Activated CD4-positive, alpha-beta T cell treated with anti-CD3 and anti-CD28 coated beads for 36 hours (primary cell): ENCODE measurements at regions of chr11 and their contacts with region 1.

Region 1: DNA sequence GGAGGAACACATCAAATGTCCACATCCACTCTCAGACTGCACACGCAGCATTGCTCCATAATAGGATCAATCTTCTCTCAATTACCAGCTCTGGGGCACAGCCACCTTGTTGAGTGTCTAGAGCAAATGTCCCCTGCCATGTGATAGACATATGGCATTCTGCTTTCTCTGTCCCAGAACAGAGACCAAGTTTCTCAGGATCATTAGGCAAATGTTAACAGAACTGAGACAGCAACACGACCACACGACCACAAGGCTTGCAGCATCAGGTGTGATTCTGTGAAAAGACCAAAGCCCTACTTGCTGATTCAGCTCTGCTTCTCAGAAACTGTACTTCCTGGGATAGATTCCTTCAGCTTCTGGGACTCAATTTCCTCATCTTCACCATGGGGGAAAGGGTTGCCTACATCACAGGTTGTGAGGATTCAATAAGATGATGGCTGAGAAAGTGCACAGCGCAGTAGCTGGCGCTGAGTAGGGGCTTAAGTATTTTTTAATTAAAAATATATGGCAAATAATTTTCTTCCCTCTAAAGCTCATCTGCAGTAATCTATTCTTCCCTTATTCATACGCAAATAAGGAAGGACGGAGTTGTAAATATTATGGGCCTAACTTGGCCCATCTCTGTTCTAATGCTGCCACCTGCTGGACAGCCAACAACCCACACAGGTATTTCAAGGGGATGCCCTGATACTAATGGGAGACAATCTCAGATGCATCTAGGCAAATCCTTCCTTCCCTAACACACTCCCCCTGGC is 54.3 kb upstream of the USP47 start:
- DNase-seq: peak; percentile 82
- ATAC-seq: peak; percentile 90
- H3K4me3 Mint-ChIP-seq: no peak overlapping the region
- H3K27ac Mint-ChIP-seq: no peak overlapping the region
- H3K4me1 Mint-ChIP-seq: no peaks in the 10 kb centered on the region
- H3K27me3 Mint-ChIP-seq: peaks cover 2% of the 10 kb centered on the region

Region 2: GRCh38 chr11:10770626-10771254 is 1016.7 kb before region 1 on chr11:
- CTCF ChIA-PET with region 1: interaction called, 3 read pairs
- POLR2A ChIA-PET with region 1: no interaction called
- intact Hi-C with region 1: loop called in 1 of 2 experiments (anchors 5 kb)
- DNase-seq: peak; percentile 55
- ATAC-seq: no peak
- H3K4me3 Mint-ChIP-seq: no peak overlapping the region
- H3K27ac Mint-ChIP-seq: no peak overlapping the region
- H3K4me1 Mint-ChIP-seq: no peaks in the 10 kb centered on the region
- H3K27me3 Mint-ChIP-seq: no peaks in the 10 kb centered on the region

Region 3: GRCh38 chr11:11028017-11028692 is 759.3 kb before region 1 on chr11:
- CTCF ChIA-PET with region 1: interaction called, 44 read pairs
- POLR2A ChIA-PET with region 1: no interaction called
- intact Hi-C with region 1: loop called (anchors 1 kb)
- DNase-seq: peak; percentile 88
- ATAC-seq: peak; percentile 91
- H3K4me3 Mint-ChIP-seq: no peak overlapping the region
- H3K27ac Mint-ChIP-seq: no peak overlapping the region
- H3K4me1 Mint-ChIP-seq: no peaks in the 10 kb centered on the region
- H3K27me3 Mint-ChIP-seq: no peaks in the 10 kb centered on the region

Region 4: GRCh38 chr11:11125618-11126017 is 661.9 kb before region 1 on chr11:
- CTCF ChIA-PET with region 1: no interaction called
- POLR2A ChIA-PET with region 1: no interaction called
- intact Hi-C with region 1: no loop called
- DNase-seq: no peak
- ATAC-seq: no peak
- H3K4me3 Mint-ChIP-seq: no peak overlapping the region
- H3K27ac Mint-ChIP-seq: no peak overlapping the region
- H3K4me1 Mint-ChIP-seq: no peaks in the 10 kb centered on the region
- H3K27me3 Mint-ChIP-seq: peaks cover 3% of the 10 kb centered on the region

Region 5: GRCh38 chr11:11265994-11266606 is 521.4 kb before region 1 on chr11:
- CTCF ChIA-PET with region 1: no interaction called
- POLR2A ChIA-PET with region 1: no interaction called
- intact Hi-C with region 1: loop called in 1 of 2 experiments (anchors 5 kb)
- DNase-seq: peak; percentile 83
- ATAC-seq: peak; percentile 68
- H3K4me3 Mint-ChIP-seq: no peak overlapping the region
- H3K27ac Mint-ChIP-seq: no peak overlapping the region
- H3K4me1 Mint-ChIP-seq: no peaks in the 10 kb centered on the region
- H3K27me3 Mint-ChIP-seq: peaks cover 2% of the 10 kb centered on the region

Region 6: DNA sequence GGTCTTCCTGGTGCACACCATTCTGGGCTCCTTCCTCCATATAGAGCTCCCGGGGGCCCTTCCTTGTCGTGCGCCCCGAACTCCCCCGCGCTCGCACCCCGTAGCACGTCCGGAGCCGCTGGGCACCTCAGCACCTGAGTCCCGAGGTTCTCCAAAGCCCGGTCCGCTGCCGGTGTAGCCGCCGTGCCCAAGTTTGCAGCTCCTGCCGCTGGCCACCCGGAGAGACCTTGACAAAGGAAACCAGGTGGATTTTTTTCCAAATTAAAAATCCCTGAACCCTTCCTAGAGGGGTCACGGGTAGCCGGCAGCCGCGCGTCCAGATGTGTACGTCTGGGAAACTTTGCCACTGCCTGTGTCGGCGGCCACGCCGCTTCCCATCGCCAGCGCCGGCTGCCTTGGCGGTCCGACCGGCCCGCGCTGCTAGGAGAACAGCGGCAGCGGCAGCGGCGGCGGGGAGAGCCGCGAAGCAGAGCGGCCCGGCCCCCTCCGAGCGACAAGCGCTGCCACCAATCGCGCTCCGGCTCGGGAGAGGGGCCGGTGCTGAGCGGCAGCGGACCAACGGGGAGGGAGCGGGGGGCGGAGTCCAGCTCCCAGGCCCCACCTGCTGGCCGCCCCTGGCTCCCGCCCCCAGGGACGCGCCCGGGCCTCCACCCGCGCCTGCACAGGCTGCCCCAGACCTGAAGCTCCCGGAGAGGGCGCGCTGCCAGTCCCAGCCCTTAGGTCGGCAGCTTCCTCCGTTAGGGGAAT is 165.7 kb before region 1 on chr11 and contains the start of gene GALNT18:
- CTCF ChIA-PET with region 1: interaction called, 3 read pairs
- POLR2A ChIA-PET with region 1: no interaction called
- intact Hi-C with region 1: loop called (anchors 5 kb)
- DNase-seq: peak; percentile 94
- ATAC-seq: peak; percentile 99
- H3K4me3 Mint-ChIP-seq: peak within 1 kb of the TSS; percentile 80
- H3K27ac Mint-ChIP-seq: peak within 1 kb of the TSS; percentile 63
- H3K4me1 Mint-ChIP-seq: peaks cover 5% of the 10 kb centered on the region
- H3K27me3 Mint-ChIP-seq: peaks cover 37% of the 10 kb centered on the region
- total RNA-seq, gene GALNT18: 6.9 to 8.8 TPM

Region 7: DNA sequence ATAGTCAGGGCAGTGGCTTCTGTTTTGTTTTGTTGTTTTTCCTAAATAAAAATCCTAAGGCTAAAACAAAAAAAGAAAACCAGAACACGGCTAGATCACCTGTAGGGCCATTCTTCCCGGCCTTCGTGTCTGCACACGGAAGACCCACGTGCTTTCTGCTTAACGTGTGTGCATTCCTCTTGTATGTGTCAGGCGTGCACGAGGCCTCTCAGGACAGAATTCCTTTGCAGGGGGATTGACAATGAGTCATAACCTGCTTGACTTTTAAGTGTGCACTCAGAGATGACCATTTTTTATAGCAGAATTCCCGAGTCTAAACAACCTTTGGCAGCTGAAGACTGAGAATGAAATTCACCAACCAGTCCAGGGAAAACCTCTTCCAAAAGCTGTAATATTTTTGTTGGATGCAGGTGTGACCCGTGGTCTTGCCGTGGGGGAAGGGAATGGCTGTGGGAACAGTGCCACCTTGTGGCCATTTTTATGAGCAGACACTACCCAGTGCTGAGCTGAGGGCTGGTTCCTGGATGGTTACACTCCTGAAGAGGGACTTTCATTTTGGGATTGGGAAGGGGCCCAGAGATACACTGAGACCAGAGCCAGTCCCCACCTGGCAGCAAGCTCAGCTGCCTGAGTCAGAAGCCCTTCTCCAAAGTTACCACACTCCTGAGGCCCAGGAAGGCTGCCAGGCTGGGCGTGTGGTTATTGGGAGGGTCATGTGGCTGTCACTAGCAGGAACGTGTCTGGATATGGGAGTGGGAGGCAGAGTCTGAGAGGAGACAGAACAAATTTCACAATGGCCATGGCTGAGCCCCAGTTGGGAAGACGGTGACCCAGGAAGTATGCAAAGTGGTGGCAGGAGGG is 256.7 kb after region 1 on chr11:
- CTCF ChIA-PET with region 1: interaction called, 5 read pairs
- POLR2A ChIA-PET with region 1: no interaction called
- intact Hi-C with region 1: loop called in 1 of 2 experiments (anchors 2 kb)
- DNase-seq: peak; percentile 80
- ATAC-seq: peak; percentile 73
- H3K4me3 Mint-ChIP-seq: no peak overlapping the region
- H3K27ac Mint-ChIP-seq: no peak overlapping the region
- H3K4me1 Mint-ChIP-seq: peaks cover 11% of the 10 kb centered on the region
- H3K27me3 Mint-ChIP-seq: peaks cover 4% of the 10 kb centered on the region